ENCODE measurements at regions of chr11 and their contacts with region 1.

Region 1: DNA sequence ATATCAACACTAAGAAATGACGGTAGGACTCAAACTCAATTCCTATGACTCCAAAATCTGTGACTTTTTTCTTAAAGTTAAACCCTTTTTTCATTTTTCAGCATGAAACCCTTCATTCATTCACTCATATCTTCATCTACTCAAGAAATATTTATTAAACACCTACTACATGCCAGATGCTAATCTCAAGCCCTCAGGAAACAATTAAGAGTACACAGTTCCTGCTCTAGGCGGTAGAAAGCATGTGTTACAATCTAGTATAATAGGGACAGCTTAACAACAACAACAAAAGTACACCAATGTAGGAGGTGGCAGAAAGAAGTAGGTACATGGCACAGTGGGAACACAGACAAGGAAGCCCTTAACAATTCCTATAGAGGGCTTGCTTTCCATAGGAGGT is 70.1 kb downstream of the SIK3 start:
- DNase-seq: no peak
- H3K4me3 Mint-ChIP-seq: no peak overlapping the region
- H3K27ac Mint-ChIP-seq: no peak overlapping the region
- H3K4me1 Mint-ChIP-seq: peaks cover 19% of the 10 kb centered on the region
- H3K27me3 Mint-ChIP-seq: no peaks in the 10 kb centered on the region
- CTCF ChIP-seq: no peak

Region 2: DNA sequence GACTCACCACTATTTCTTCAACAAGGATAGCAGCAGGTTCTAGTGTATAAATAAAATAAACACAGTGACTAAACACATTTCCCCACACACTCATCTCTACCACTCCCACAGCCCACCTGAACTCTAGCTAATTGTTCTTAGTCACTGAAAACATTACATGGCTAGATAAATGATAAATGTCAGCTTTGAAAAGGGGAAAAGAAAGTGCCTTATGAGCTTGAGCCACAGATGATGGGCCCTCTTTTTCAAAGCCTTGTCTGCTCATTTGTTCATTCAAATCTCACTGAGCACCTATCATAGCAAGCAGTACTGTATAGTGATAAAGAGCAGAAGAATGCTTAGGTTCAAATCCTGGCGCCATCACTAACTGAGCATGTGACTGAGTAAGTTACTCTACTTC is 11.7 kb after region 1 on chr11:
- CTCF ChIA-PET with region 1: interaction called, 3 read pairs
- POLR2A ChIA-PET with region 1: interaction called, 11 read pairs
- intact Hi-C with region 1: no loop called
- DNase-seq: peak; percentile 53
- H3K4me3 Mint-ChIP-seq: no peak overlapping the region
- H3K27ac Mint-ChIP-seq: peak overlapping the region; percentile 46
- H3K4me1 Mint-ChIP-seq: peaks cover 33% of the 10 kb centered on the region
- H3K27me3 Mint-ChIP-seq: no peaks in the 10 kb centered on the region
- CTCF ChIP-seq: no peak

Measured in MCF 10A (cell line).